Aorta (tissue), 5 donors: ENCODE measurements at regions of chr19 and their contacts with region 1.

Region 1: DNA sequence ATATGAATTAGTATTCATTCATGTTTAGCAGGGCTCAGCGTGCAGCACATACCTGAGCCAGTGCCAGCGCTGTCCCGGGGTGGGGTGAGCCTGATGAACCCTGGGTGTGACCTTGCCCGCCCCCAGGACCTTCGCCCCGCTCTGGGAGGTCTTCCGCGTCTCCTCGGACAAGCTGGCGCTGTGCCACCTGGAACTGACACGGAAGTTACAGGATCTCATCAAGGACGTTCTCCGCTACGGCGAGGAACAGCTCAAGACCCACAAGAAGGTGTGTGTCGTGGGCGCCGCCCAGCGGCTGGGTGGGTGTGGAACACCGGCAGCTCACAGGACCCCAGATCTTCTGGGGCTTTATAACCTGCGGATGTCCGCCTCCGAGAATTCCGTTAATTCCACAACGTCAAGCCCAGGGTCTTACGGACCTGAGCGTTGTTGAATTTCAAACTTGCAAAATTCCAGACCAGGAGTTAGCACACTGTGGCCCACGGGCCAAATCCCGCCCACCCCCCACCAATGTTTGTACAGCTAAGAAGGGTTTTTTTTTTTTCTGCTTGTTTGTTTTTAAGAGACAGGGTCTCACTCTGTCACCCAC is 15.4 kb downstream of the FCHO1 start:
- DNase-seq: peak; percentile 88 to 93
- ATAC-seq: peak; percentile 79
- H3K4me3 ChIP-seq: no peak overlapping the region
- H3K27ac ChIP-seq: no peak overlapping the region
- H3K4me1 ChIP-seq: no peaks in the 10 kb centered on the region
- H3K27me3 ChIP-seq: no peaks in the 10 kb centered on the region

Region 2: GRCh38 chr19:17565611-17566010 is 201.0 kb before region 1 on chr19:
- intact Hi-C with region 1: loop called in 1 of 2 experiments (anchors 5 kb)
- DNase-seq: no peak
- ATAC-seq: no peak
- H3K4me3 ChIP-seq: no peak overlapping the region
- H3K27ac ChIP-seq: no peak overlapping the region
- H3K4me1 ChIP-seq: no peaks in the 10 kb centered on the region
- H3K27me3 ChIP-seq: no peaks in the 10 kb centered on the region

Region 3: DNA sequence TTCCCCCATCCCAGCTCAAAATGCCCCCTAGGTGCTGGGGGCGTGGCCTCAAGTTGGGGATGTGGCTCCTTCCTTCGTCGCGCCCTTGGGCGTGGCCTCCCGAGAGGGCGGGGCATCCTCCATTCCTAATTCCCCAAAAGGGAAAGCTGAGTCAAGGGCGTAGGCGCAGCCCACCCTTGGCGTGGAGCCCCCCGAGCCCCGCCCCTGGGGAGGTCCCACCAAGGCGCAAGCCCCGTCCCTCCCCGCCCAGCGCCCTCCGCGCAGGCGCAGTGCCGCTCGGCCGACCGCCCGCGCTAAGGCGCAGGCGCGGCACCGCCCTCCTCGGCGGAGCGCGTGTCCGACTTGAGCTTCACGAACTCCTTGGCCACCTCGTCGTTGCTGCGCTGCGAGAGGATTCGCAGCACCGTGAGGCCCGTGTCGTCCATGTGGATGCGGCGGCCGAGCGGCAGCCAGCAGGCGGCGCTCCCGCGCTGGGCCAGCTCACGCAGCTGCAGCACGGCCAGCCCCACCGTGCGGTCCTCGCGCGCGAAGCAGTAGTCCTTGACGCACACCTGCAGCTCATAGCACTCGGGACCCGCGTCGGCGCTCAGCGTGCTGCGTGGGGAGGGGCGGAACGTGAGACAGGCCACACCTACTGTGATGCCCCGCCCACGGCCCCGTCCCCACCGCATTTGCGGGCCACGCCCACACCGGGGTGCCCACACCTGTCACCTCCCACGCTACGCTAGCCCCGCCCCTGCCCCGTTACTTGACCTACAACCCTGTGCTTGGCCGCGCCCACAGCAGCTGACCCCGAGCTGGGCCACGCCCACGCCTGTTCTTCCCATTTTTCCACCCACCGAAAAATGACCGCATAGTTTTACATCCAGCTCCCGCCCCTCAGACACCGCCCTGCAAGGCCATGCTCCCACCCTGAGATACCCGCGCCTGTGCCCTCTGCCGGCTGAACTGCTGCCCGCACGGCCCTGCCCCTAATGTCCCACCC is 160.6 kb before region 1 on chr19:
- intact Hi-C with region 1: loop called (anchors 5 kb)
- DNase-seq: peak; percentile 87 to 90
- ATAC-seq: peak; percentile 79
- H3K4me3 ChIP-seq: no peak overlapping the region
- H3K27ac ChIP-seq: no peak overlapping the region
- H3K4me1 ChIP-seq: no peaks in the 10 kb centered on the region
- H3K27me3 ChIP-seq: no peaks in the 10 kb centered on the region

Region 4: DNA sequence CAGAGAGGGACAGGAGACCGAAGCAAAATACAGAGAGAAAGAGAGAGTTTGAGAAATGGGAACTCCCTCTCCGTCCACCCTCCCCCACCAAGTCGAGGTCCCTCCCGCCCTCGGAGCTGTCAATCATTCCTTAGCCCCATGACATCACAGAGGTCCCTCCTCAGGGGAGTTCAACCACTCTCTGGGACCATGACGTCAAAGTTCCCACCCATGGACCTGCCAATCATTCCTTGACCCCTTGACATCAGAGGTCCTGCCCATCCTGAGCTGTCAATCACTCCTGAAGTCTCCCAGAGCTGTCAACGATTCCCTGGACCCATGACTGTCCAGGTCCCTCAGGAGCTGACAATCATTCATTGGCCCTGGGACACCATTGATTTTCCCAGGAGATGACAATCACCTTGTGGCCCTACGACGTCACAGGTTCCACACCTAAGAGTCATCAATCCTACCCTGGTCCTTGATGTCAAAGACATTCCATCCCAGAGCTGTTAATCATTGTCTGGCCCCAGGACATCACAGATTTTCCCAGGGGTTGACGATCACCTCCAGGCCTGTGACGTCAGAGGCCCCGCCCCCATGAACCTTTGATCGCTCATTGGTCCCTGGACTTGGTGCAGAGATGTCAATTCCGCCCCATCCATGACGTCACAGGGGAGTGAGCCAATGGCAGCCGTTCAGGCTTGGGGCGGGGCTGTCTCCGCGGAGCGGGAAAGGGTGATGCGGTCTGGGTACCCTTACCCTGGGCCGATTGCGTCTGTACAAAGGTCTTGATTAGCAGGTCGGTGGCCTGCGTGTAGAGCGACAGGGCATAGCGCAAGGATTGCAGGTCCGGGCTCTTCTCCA is 149.5 kb before region 1 on chr19:
- intact Hi-C with region 1: no loop called
- DNase-seq: no peak
- ATAC-seq: no peak
- H3K4me3 ChIP-seq: no peak overlapping the region
- H3K27ac ChIP-seq: no peak overlapping the region
- H3K4me1 ChIP-seq: no peaks in the 10 kb centered on the region
- H3K27me3 ChIP-seq: no peaks in the 10 kb centered on the region

Region 5: GRCh38 chr19:17725422-17726078 is 41.1 kb before region 1 on chr19:
- intact Hi-C with region 1: no loop called
- DNase-seq: no peak
- ATAC-seq: no peak
- H3K4me3 ChIP-seq: no peak overlapping the region
- H3K27ac ChIP-seq: no peak overlapping the region
- H3K4me1 ChIP-seq: no peaks in the 10 kb centered on the region
- H3K27me3 ChIP-seq: no peaks in the 10 kb centered on the region